Mammary epithelial cell (primary cell): ENCODE measurements at regions of chr3 and their contacts with region 1.

Region 1: DNA sequence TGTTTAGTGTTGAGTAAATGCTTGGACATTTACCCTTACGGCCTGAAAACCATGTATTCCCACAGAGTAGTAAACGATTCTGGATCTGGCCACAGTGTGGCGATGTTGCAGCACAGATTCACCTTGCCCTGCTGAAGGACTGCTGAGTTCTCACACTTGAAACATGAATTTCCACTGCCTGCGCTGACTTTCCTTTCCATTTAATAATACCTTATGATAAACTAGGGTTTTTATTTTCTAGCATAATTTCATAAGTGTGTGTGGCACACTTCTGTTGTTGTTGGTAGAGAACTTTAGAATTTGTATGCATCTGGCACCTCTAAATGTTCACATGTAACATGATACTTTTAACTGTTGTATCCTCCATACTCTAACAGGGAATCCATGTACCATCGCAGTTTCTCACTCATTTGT is 53.9 kb downstream of the C3orf38 start:
- DNase-seq: peak; percentile 42
- H3K4me3 ChIP-seq: no peak overlapping the region
- H3K27ac ChIP-seq: no peak overlapping the region
- H3K4me1 ChIP-seq: no peaks in the 10 kb centered on the region
- H3K27me3 ChIP-seq: no peaks in the 10 kb centered on the region
- CTCF ChIP-seq: peak; percentile 84 to 90

Region 2: DNA sequence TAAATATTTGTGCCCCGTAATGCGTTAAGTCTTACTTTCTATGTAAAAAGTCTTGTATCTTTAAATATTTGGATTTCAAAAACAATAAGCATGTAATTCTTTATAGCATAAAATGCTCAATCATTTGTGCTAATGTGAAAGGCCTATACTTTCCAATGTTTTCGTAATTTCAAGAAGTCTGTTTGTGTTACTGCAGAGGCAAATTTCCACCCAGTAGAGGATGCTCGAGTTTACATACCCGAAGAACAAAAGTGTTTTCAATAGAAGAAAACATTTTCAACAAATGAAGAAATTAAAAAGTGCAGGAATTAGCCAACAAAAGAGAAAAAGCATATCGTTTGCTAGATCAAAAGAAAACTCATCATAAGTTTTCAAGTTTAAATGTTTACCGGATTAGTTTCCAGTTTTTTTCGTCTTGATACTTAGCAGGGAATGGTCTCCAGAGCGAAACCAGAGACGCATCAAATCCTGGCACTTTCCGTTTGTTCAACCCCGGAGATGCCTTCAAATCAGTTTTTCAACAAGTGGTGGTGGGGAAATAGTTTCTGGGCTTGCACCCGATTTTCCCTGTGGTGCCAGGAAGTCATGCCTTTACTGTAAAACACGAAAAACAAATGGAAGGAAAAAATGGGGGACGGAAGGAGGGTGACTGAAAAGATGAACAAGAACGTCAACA is 145.9 kb before region 1 on chr3:
- CTCF ChIA-PET with region 1: no interaction called
- dilution Hi-C with region 1: no loop called
- in situ Hi-C with region 1: no loop called
- intact Hi-C with region 1: no loop called
- DNase-seq: peak; percentile 11
- H3K4me3 ChIP-seq: peak overlapping the region; percentile 62 to 81 (median 75)
- H3K27ac ChIP-seq: peak overlapping the region; percentile 50
- H3K4me1 ChIP-seq: peaks cover 16% of the 10 kb centered on the region
- H3K27me3 ChIP-seq: no peaks in the 10 kb centered on the region
- CTCF ChIP-seq: peak in 1 of 2 donors; percentile 32

Region 3: GRCh38 chr3:89107461-89108290 is 904.0 kb after region 1 on chr3 and contains the start of gene EPHA3:
- CTCF ChIA-PET with region 1: no interaction called
- dilution Hi-C with region 1: no loop called
- in situ Hi-C with region 1: loop called in 1 of 2 experiments (anchors 25 kb)
- intact Hi-C with region 1: loop called (anchors 5 kb)
- DNase-seq: peak; percentile 69
- H3K4me3 ChIP-seq: peak within 1 kb of the TSS; percentile 39 to 55 (median 54)
- H3K27ac ChIP-seq: no peak within 1 kb of the TSS
- H3K4me1 ChIP-seq: peaks cover 10% of the 10 kb centered on the region
- H3K27me3 ChIP-seq: peaks cover 8% of the 10 kb centered on the region
- CTCF ChIP-seq: no peak
- total RNA-seq, gene EPHA3: 0.26 to 0.67 TPM

Region 4: DNA sequence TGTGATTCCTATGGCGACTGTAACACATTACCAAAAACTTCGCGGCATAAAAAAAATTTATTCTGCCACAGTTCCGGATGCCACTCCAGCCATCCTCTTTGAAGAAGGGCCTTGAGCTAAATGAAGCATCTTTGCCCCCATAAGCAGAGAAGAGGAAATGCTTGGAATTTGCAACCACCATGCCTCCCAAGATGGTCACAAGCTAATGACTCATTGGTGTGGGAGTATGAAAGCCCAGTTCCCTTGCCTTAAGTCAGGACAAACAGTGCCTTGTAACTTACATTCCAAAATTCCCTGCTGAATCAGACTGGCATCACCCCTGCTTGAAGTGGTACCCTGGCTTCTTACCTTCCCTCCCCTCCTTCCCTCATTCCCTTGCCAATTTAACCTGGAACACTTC is 1981.2 kb after region 1 on chr3:
- CTCF ChIA-PET with region 1: no interaction called
- dilution Hi-C with region 1: no loop called
- in situ Hi-C with region 1: loop called in 1 of 2 experiments (anchors 25 kb)
- intact Hi-C with region 1: loop called (anchors 1 kb)
- DNase-seq: peak; percentile 80
- H3K4me3 ChIP-seq: no peak overlapping the region
- H3K27ac ChIP-seq: no peak overlapping the region
- H3K4me1 ChIP-seq: no peaks in the 10 kb centered on the region
- H3K27me3 ChIP-seq: no peaks in the 10 kb centered on the region
- CTCF ChIP-seq: no peak